ENCODE measurements at regions of chr7 and their contacts with region 1.

Region 1: DNA sequence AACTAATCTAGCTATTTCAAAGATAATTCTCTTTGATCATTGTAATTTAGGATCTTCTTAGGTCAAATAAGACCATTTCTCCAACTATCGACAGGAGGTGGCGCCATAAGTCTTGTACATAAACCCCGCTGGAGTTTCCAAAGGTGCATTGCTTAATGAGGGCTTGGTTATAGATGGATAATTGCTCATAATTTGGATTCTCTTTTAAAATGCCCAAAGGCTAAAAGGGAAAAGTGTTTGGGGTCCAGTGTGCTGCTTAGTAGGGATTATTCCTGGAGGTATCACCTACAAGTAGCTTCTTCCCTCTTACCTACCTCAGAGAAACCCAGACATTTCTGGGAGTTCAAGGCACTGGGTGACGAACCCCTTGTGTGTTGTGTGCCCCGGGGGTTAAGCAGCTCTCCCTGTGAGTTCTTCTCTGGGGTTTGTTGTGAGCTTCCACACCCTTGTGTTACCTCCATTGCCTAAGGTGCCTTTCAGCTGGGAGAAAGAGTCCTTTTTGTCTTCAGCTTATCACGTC is 75.2 kb downstream of the PAXIP1 start:
- DNase-seq: peak; percentile 45 to 90 (median 74)
- ATAC-seq: peak; percentile 60 to 71 (median 67)
- H3K4me3 ChIP-seq: peak overlapping the region; percentile 66 to 74
- H3K4me3 Mint-ChIP-seq: peak overlapping the region; percentile 88 to 97 (median 96)
- H3K27ac ChIP-seq: peak overlapping the region; percentile 85
- H3K27ac Mint-ChIP-seq: peak overlapping the region; percentile 96
- H3K4me1 ChIP-seq: peaks cover 13 to 24% of the 10 kb centered on the region in 2 experiments
- H3K4me1 Mint-ChIP-seq: peaks cover 36 to 39% (median 38%) of the 10 kb centered on the region in 3 donors
- H3K27me3 ChIP-seq: no peaks in the 10 kb centered on the region
- H3K27me3 Mint-ChIP-seq: no peaks in the 10 kb centered on the region

Region 2: GRCh38 chr7:154886591-154886990 is 41.1 kb before region 1 on chr7:
- CTCF ChIA-PET with region 1: no interaction called
- POLR2A ChIA-PET with region 1: no interaction called
- DNase-seq: no peak
- ATAC-seq: no peak
- H3K4me3 ChIP-seq: no peak overlapping the region
- H3K4me3 Mint-ChIP-seq: no peak overlapping the region
- H3K27ac ChIP-seq: no peak overlapping the region
- H3K27ac Mint-ChIP-seq: no peak overlapping the region
- H3K4me1 ChIP-seq: no peaks in the 10 kb centered on the region
- H3K4me1 Mint-ChIP-seq: no peaks in the 10 kb centered on the region
- H3K27me3 ChIP-seq: peaks cover 0 to 30% of the 10 kb centered on the region in 2 experiments
- H3K27me3 Mint-ChIP-seq: peaks cover 4 to 6% of the 10 kb centered on the region in 2 donors

Region 3: GRCh38 chr7:154913638-154914312 is 13.9 kb before region 1 on chr7:
- CTCF ChIA-PET with region 1: interaction called, 8 to 11 read pairs
- POLR2A ChIA-PET with region 1: no interaction called
- DNase-seq: peak; percentile 62 to 92 (median 82)
- ATAC-seq: peak; percentile 89 to 97 (median 96)
- H3K4me3 ChIP-seq: peak overlapping the region; percentile 34 to 61
- H3K4me3 Mint-ChIP-seq: peak overlapping the region; percentile 80 to 89 (median 81)
- H3K27ac ChIP-seq: no peak overlapping the region
- H3K27ac Mint-ChIP-seq: no peak overlapping the region
- H3K4me1 ChIP-seq: peaks cover 0 to 15% of the 10 kb centered on the region in 2 experiments
- H3K4me1 Mint-ChIP-seq: peaks cover 3 to 6% (median 5%) of the 10 kb centered on the region in 3 donors
- H3K27me3 ChIP-seq: peaks cover 0 to 58% of the 10 kb centered on the region in 2 experiments
- H3K27me3 Mint-ChIP-seq: peaks cover 25 to 27% of the 10 kb centered on the region in 2 donors

Region 4: DNA sequence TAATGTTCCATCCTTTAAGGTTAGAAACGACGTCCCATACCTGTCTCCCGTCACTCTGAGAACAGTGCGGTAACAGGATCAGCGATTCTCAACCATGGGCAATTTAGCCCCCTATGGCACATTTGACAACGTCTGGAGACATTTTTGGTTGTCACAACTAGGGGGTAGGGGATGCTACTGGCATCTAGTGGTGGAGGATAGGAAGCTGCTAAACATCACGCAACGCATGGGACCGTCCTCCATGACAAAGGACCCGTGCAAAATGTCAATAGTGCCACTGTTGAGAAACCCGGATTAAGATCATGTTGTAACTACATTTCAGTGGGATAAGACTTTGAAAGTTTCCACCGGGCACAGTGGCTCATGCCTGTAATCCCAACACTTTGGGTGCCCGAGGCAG is 80.3 kb after region 1 on chr7:
- CTCF ChIA-PET with region 1: interaction called, 9 to 13 read pairs
- POLR2A ChIA-PET with region 1: no interaction called
- DNase-seq: peak in 13 of 35 experiments; percentile 2 to 59 (median 17)
- ATAC-seq: no peak
- H3K4me3 ChIP-seq: no peak overlapping the region
- H3K4me3 Mint-ChIP-seq: no peak overlapping the region
- H3K27ac ChIP-seq: no peak overlapping the region
- H3K27ac Mint-ChIP-seq: no peak overlapping the region
- H3K4me1 ChIP-seq: peaks cover 6 to 9% of the 10 kb centered on the region in 2 experiments
- H3K4me1 Mint-ChIP-seq: peaks cover 10 to 15% (median 14%) of the 10 kb centered on the region in 3 donors
- H3K27me3 ChIP-seq: no peaks in the 10 kb centered on the region
- H3K27me3 Mint-ChIP-seq: no peaks in the 10 kb centered on the region

Region 5: DNA sequence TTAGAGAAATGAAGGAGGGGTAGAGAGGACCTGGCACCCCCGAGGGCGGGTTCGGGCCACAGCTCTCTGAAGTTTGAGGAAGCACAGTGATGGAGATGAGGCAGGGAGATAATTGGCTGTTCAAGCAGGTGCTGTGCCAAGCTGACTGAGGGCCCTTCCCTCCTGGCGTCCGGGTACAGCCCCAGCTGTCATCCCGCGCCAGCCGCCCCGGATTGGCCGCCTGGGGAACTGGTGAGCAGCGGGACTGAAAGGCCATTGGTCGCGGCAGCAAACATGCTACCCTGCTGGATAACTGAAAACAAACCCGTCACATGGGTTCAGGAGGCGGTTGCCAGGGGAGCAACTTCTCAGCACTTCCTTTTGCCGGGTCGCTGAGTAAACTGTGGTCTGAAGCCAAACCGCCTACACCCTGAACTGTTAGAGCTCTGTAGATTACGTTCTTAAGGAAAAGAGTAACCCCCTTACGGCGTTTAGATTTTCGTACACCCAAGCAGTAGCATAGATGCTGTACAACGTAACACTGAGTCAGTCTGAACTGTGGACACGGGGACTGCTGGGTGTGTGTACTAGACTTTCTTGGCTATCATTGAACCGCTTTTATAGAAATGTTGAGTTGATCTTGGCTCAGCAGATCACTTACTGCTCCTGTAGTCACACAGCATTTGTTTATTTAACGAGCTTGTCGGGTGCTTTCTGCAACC is 371.3 kb after region 1 on chr7:
- CTCF ChIA-PET with region 1: interaction called, 5 to 33 read pairs
- POLR2A ChIA-PET with region 1: interaction called in 1 of 2 experiments, 3 read pairs
- DNase-seq: peak; percentile 85 to 99 (median 96)
- ATAC-seq: peak; percentile 70 to 77 (median 72)
- H3K4me3 ChIP-seq: peak overlapping the region; percentile 38 to 62
- H3K4me3 Mint-ChIP-seq: peak overlapping the region; percentile 89 to 91 (median 90)
- H3K27ac ChIP-seq: peak overlapping the region; percentile 89
- H3K27ac Mint-ChIP-seq: peak overlapping the region; percentile 96 to 99
- H3K4me1 ChIP-seq: peaks cover 18 to 38% of the 10 kb centered on the region in 2 experiments
- H3K4me1 Mint-ChIP-seq: peaks cover 40 to 48% (median 40%) of the 10 kb centered on the region in 3 donors
- H3K27me3 ChIP-seq: no peaks in the 10 kb centered on the region
- H3K27me3 Mint-ChIP-seq: no peaks in the 10 kb centered on the region

Region 6: GRCh38 chr7:155738652-155739537 is 811.2 kb after region 1 on chr7:
- CTCF ChIA-PET with region 1: interaction called, 4 to 10 read pairs
- POLR2A ChIA-PET with region 1: no interaction called
- DNase-seq: peak; percentile 27 to 74 (median 60)
- ATAC-seq: peak; percentile 75 to 98 (median 86)
- H3K4me3 ChIP-seq: peak overlapping the region in 1 of 2 donors; percentile 20
- H3K4me3 Mint-ChIP-seq: peak overlapping the region in 1 of 3 donors; percentile 61
- H3K27ac ChIP-seq: no peak overlapping the region
- H3K27ac Mint-ChIP-seq: peak overlapping the region; percentile 65 to 77
- H3K4me1 ChIP-seq: peaks cover 2 to 13% of the 10 kb centered on the region in 2 experiments
- H3K4me1 Mint-ChIP-seq: peaks cover 37 to 52% (median 48%) of the 10 kb centered on the region in 3 donors
- H3K27me3 ChIP-seq: no peaks in the 10 kb centered on the region
- H3K27me3 Mint-ChIP-seq: no peaks in the 10 kb centered on the region

Measured in T-cell (primary cell).